ENCODE measurements at regions of chr16 and their contacts with region 1.

Region 1: GRCh38 chr16:75110637-75111513 is 5.7 kb downstream of the LDHD start:
- H3K4me3 ChIP-seq: no peak overlapping the region
- H3K27ac ChIP-seq: no peak overlapping the region
- H3K4me1 ChIP-seq: no peaks in the 10 kb centered on the region; the same call in 1 of the 2 replicates
- CTCF ChIP-seq: peak; percentile 94

Region 2: GRCh38 chr16:74984535-74985296 is 126.2 kb before region 1 on chr16 and contains the start of gene WDR59:
- CTCF ChIA-PET with region 1: interaction called, 15 read pairs
- POLR2A ChIA-PET with region 1: interaction called, 10 read pairs
- H3K4me3 ChIP-seq: peak within 1 kb of the TSS; percentile 98
- H3K27ac ChIP-seq: peak within 1 kb of the TSS; percentile 6; the same call in 1 of the 2 replicates
- H3K4me1 ChIP-seq: 0 out of 2 replicates have a peak, but pooled peaks cover 3% of the 10 kb centered on the region
- CTCF ChIP-seq: peak; percentile 45; the same call in 1 of the 2 replicates

Region 3: DNA sequence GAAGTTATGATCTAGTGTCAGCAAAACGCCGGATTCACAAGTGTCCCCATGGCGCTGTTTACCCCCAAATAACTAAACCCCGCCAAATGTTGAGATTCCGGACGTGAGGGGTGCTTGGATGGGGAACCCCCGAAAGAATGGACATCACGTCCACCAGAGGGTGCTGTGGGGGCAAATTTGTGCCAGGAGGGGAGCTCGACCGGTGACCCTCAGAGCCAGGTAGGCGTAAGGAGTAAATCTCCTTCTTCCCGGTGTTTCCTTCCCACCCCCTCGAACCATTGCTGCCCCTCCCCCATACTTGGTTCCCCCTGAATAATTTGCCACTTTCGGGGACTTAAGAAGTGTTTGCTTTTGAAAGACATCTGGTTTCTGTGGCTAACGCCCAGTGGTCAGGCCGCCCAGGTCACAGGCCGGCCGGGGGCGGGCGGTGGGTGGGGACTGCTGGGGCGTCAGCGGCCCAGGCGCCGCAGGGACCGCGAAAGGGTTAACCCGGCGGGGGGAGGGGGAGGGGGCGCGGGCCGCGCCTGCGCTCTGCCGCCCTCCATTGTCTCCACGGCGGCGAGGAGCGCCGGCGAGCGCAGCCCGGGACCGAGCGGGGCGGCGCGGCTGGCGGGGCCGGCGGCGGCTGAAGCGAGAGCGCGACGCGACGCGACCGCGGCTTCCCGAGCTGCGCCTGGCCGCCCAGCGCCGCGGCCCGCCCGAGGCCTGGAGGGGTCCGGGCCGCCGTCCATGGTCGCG is 112.2 kb before region 1 on chr16 and contains the start of gene ZNRF1:
- CTCF ChIA-PET with region 1: interaction called, 47 read pairs
- POLR2A ChIA-PET with region 1: interaction called, 8 read pairs
- H3K4me3 ChIP-seq: peak within 1 kb of the TSS; percentile 63
- H3K27ac ChIP-seq: peak within 1 kb of the TSS; percentile 69; the same call in 1 of the 2 replicates
- H3K4me1 ChIP-seq: peaks cover 3% of the 10 kb centered on the region; the same call in 1 of the 2 replicates
- CTCF ChIP-seq: peak; percentile 79

Region 4: DNA sequence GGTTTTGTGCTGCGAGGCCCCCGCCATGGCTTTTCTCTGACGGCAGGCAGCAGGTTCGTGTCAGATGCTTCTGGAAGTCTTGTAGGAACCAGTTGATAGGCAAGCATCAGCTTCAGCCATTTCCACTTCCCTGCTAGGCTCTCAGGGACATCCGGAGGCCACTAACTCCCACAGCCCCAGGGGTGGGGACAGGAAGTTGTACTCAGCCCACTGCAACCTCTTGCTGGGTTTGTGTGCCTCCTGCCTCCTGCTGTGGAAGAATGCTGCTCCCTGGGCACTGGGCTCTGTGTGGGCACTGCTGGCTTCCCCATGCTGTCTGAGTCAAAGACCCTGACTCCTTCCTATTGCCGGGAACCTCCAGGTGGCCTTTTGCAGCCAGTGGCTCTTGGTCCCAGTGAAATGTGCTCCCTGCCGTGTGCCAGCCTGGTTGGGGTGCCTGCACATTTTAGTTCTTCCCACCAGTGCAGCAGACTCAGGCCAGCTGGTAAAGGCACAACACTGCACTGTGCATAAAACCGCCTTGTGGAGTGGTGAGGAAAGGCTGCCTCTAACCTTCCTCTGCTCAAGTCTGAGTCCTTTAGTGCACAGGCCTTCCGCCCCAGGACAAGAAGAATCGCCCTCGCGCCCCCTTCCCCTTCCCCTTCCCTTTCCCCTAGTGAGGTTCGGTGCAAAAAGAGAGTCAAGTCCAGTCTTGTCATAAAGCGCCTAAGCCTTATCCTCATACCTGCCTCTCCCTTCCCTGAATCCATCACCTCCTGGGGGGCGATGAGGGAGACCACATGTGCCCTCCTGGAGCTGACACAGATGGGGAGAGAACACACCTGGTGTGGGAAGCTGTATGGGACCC is 10.9 kb before region 1 on chr16:
- CTCF ChIA-PET with region 1: interaction called, 23 read pairs
- POLR2A ChIA-PET with region 1: no interaction called
- H3K4me3 ChIP-seq: no peak overlapping the region
- H3K27ac ChIP-seq: no peak overlapping the region
- H3K4me1 ChIP-seq: no peaks in the 10 kb centered on the region
- CTCF ChIP-seq: no peak

Region 5: DNA sequence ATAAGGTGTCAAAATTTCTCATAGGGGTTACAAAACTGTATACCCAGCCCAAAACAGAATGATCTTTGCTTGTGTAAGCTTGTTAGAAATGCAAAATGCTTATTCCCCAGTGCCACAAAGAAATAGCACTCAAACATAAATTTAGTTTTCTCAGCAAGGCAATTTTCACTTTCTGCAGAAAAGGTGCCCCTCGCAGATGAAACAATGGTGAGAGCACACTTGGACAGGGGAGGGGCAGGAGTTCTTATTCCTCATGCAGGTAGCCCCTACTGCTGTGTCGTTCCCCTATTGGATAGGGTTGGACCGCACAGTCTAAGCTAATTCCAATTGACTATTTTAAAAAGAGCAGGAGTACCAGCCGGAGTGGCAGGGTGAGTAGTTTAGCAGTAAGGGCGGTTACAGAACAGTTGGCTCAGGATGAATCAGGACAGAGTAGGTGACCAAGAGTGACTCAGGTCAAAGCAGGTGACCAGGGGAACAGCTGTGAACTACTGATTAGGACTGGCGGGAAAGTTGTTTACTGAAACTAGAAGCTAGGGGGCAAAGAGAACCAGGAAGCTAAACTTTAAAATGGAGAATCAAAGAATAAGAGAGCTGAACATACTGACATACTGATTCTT is 11.2 kb after region 1 on chr16:
- CTCF ChIA-PET with region 1: interaction called, 14 read pairs
- POLR2A ChIA-PET with region 1: no interaction called
- H3K4me3 ChIP-seq: no peak overlapping the region
- H3K27ac ChIP-seq: no peak overlapping the region
- H3K4me1 ChIP-seq: no peaks in the 10 kb centered on the region
- CTCF ChIP-seq: no peak

Region 6: DNA sequence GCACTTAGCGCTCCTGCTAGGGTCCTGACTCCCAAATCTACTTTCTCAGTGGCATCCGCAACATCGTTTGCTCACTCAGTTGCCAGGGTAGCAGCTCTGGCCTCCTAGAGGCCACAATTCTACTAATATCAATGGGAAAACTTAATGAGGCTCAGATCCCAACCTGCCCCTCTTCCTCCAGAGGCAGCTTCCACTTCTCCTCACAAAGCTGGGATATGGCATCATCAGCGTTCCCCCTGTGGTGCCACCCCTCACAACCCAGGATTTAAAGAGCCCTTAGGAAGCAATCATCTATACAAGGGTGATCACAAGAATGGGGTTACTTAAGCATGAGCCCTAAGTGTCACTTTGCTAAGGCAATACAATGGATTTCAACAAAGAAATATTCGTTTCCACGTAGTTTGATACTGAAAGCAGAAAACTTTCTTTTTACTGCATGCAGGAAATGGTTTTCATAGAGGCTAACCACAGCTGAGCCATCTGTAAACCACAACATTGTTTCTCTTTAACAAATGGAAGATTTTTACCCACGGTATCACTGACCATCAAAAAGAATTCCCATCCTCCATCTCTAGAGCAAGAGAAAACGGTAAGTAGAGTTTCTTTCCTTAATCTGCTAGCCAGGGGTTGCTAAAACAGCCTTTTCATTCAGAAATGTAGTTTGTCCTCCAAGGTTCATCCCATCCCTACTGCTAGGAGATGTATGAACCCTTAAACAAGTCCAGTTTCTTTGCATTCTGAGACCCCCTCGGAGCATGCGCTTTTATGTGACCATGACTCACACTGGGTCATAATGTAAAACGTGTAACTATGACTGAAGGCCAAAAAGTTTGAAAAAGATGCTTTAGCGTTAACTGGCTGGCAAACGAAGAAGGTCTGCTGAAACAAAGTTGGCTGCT is 208.9 kb after region 1 on chr16:
- CTCF ChIA-PET with region 1: no interaction called
- POLR2A ChIA-PET with region 1: no interaction called
- H3K4me3 ChIP-seq: no peak overlapping the region
- H3K27ac ChIP-seq: no peak overlapping the region
- H3K4me1 ChIP-seq: peaks cover 10% of the 10 kb centered on the region
- CTCF ChIP-seq: no peak

Measured in HEK293 (cell line).